ENCODE measurements at regions of chr3 and their contacts with region 1.

Region 1: DNA sequence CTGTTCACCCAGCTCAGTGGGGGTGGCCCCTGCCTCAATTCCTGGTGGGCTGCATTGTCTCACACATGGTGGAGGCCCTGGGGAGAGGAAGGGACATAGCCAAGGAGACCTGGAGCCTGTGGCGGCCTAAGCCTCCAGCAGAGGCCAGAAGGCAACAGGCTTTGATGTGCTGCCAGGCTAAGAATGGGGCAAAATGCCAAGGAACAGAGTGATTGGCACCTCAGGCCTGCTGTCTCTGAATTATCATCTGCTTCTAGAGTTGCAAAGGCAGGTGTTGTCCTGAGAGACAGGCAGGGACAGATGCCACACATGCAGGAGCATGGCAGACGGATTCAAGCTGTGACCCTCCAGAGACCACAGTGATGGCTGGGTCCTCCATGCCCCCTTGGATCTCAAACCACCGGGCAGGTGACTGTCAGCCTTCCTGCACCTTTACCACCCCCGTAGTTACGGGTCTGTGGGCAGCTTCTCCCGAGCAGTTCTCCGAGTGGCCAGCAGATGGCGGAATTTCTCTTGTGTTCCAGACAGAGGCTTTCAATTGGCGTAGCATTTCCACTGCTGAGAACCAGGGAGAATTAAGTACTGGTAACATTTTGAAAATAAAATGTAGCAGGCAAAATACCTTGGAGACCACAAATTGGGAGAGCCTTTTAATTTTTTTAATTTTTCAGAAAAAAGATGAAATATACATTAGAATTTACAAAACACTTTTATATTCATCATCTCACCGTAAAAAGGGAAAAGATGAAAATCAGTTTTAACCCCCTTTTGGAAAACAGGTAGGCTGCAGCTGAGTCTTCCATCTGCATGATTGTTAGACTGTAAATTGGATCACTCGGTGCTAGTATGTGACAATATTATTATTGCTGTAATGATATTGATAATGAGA is 525.5 kb upstream of the CFAP20DC start:
- DNase-seq: peak; percentile 74 to 81 (median 76)
- H3K4me3 ChIP-seq: no peak overlapping the region
- H3K4me3 Mint-ChIP-seq: peak overlapping the region in 1 of 8 donors; percentile 45
- H3K27ac ChIP-seq: no peak overlapping the region
- H3K27ac Mint-ChIP-seq: peak overlapping the region in 1 of 7 donors; percentile 19
- H3K4me1 ChIP-seq: peaks cover 7% of the 10 kb centered on the region
- H3K4me1 Mint-ChIP-seq: peaks cover 0 to 3% (median 0%) of the 10 kb centered on the region in 4 donors
- H3K27me3 ChIP-seq: no peaks in the 10 kb centered on the region
- H3K27me3 Mint-ChIP-seq: no peaks in the 10 kb centered on the region

Region 2: GRCh38 chr3:59313365-59313764 is 262.0 kb before region 1 on chr3:
- CTCF ChIA-PET with region 1: interaction called, 6 read pairs
- POLR2A ChIA-PET with region 1: no interaction called
- intact Hi-C with region 1: loop called (anchors 5 kb)
- DNase-seq: peak in 4 of 5 donors; percentile 12 to 22 (median 16)
- H3K4me3 ChIP-seq: no peak overlapping the region
- H3K4me3 Mint-ChIP-seq: no peak overlapping the region
- H3K27ac ChIP-seq: no peak overlapping the region
- H3K27ac Mint-ChIP-seq: no peak overlapping the region
- H3K4me1 ChIP-seq: no peaks in the 10 kb centered on the region
- H3K4me1 Mint-ChIP-seq: peaks cover 0 to 14% (median 5%) of the 10 kb centered on the region in 4 donors
- H3K27me3 ChIP-seq: no peaks in the 10 kb centered on the region
- H3K27me3 Mint-ChIP-seq: peaks cover 0 to 2% of the 10 kb centered on the region in 2 donors

Region 3: DNA sequence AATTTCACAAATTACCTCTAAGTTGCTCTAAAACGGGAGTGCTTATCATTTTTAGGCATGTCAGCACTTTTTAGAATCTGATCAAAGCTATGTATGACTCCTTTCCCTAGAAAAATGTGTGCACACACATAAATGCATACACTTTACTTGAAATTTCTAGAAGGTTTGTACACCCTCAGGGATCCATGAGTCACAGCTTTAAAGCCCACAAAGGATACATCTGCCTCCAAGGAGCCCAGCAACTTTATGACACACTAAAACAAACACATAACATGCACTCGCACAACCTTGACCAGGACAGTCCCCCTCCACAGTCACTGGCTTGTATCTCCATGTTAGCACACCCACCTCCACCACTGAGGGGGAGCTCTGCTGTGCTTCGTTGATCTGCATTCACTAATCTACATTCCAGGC is 196.4 kb after region 1 on chr3:
- CTCF ChIA-PET with region 1: interaction called, 13 read pairs
- POLR2A ChIA-PET with region 1: interaction called, 3 read pairs
- intact Hi-C with region 1: no loop called
- DNase-seq: no peak
- H3K4me3 ChIP-seq: no peak overlapping the region
- H3K4me3 Mint-ChIP-seq: peak overlapping the region in 4 of 8 donors; percentile 66 to 78 (median 73)
- H3K27ac ChIP-seq: no peak overlapping the region
- H3K27ac Mint-ChIP-seq: no peak overlapping the region
- H3K4me1 ChIP-seq: peaks cover 31% of the 10 kb centered on the region
- H3K4me1 Mint-ChIP-seq: peaks cover 32 to 52% (median 35%) of the 10 kb centered on the region in 4 donors
- H3K27me3 ChIP-seq: no peaks in the 10 kb centered on the region
- H3K27me3 Mint-ChIP-seq: no peaks in the 10 kb centered on the region

Region 4: DNA sequence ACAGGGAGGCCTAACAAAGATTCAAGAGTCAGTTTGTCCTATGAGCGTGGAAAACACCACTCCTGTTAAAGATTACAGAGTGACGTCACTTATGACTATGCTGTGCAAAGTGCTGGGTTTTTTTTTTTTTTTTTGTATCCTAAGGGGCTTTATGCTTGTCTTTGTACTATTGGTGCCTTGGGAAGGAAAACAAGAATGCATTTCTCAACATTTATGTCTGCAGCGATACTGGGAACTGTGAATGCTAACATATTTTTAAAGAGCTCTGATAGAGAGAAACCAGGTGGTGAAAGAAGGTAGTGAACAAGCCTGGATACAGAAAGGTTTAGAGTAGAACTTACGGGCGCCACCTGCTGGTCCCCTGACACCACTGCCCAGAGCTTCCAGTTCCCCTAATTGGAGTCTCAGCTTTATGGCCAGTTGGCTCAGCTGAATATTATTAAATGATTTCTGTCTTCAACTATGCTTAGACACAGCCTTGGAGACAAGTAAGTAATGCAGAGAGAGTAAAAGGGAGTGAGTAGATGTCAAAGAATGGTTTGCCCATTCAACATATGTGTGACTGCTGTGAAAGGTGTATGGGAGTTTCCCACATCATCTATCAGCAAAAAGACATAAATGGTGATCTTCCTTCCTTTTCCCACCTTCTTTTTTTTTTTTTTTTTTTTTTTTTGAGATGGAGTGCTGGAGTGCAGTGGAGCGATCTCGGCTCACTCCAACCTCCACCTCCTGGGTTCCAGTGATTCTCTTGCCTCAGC is 282.4 kb after region 1 on chr3:
- CTCF ChIA-PET with region 1: interaction called, 54 read pairs
- POLR2A ChIA-PET with region 1: no interaction called
- intact Hi-C with region 1: loop called (anchors 1 kb)
- DNase-seq: peak; percentile 63 to 72 (median 67)
- H3K4me3 ChIP-seq: no peak overlapping the region
- H3K4me3 Mint-ChIP-seq: peak overlapping the region in 5 of 8 donors; percentile 15 to 72 (median 25)
- H3K27ac ChIP-seq: no peak overlapping the region
- H3K27ac Mint-ChIP-seq: peak overlapping the region in 1 of 7 donors; percentile 37
- H3K4me1 ChIP-seq: no peaks in the 10 kb centered on the region
- H3K4me1 Mint-ChIP-seq: peaks cover 6 to 11% (median 7%) of the 10 kb centered on the region in 4 donors
- H3K27me3 ChIP-seq: no peaks in the 10 kb centered on the region
- H3K27me3 Mint-ChIP-seq: no peaks in the 10 kb centered on the region

Region 5: DNA sequence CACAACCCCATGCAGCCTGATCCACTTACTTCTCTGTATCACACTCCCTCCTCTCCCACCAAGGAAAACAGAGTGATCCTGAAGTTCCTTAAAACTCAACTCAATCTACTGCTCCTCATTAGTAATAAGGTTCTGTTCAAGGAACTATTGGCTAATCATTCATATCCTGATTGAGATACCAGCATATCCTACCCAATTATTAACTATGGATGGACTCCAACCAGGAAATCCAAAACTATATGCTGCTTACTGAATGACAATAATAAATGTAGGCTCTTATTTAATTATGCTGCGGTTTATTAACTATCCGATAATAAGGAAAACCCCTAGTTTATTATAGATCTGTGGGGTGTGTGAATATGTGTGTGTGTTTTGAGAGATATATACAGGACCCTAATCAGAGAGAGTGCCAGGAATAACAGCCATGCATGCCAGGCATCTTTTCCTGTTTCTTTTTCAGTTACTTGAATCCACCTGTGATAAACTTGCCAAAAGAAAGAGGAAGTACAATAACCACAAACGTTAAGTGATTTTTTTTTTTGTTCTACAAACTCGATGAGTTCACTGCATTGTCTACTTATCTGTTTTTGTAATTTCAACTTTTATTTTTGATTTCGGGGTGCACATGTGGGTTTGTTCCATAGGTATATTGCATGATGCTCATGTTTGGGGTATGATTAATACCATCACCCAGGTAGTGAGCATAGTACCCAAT is 506.2 kb after region 1 on chr3:
- CTCF ChIA-PET with region 1: no interaction called
- POLR2A ChIA-PET with region 1: no interaction called
- intact Hi-C with region 1: no loop called
- DNase-seq: peak in 4 of 5 donors; percentile 30 to 40 (median 36)
- H3K4me3 ChIP-seq: peak overlapping the region in 1 of 2 donors; percentile 27
- H3K4me3 Mint-ChIP-seq: peak overlapping the region; percentile 74 to 96 (median 84)
- H3K27ac ChIP-seq: no peak overlapping the region
- H3K27ac Mint-ChIP-seq: peak overlapping the region; percentile 70 to 94 (median 86)
- H3K4me1 ChIP-seq: peaks cover 43% of the 10 kb centered on the region
- H3K4me1 Mint-ChIP-seq: peaks cover 29 to 50% (median 41%) of the 10 kb centered on the region in 4 donors
- H3K27me3 ChIP-seq: no peaks in the 10 kb centered on the region
- H3K27me3 Mint-ChIP-seq: no peaks in the 10 kb centered on the region

Region 6: DNA sequence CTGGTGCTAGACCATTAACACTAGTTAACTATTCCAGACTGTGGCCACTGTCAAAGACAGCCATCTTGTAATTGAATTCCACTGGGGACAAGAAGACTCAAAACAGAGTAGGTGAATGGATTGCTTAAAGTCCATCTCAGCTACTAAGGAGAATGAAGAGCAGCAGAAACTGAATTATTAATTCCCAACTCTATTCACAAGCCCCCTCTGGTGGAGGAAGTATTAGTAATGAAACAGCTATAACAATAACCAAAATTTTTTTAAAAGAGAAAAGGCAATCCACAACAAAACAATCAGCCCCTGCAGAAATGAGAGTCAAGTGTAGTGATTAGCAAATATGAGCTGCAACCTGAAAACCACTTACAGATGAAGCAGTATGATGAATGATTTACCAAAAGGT is 1373.1 kb after region 1 on chr3:
- CTCF ChIA-PET with region 1: no interaction called
- POLR2A ChIA-PET with region 1: no interaction called
- intact Hi-C with region 1: loop called (anchors 5 kb)
- DNase-seq: no peak
- H3K4me3 ChIP-seq: no peak overlapping the region
- H3K4me3 Mint-ChIP-seq: no peak overlapping the region
- H3K27ac ChIP-seq: no peak overlapping the region
- H3K27ac Mint-ChIP-seq: no peak overlapping the region
- H3K4me1 ChIP-seq: no peaks in the 10 kb centered on the region
- H3K4me1 Mint-ChIP-seq: peaks cover 0 to 1% (median 0%) of the 10 kb centered on the region in 4 donors
- H3K27me3 ChIP-seq: no peaks in the 10 kb centered on the region
- H3K27me3 Mint-ChIP-seq: no peaks in the 10 kb centered on the region